Sciatic nerve (tissue), 2 donors: ENCODE measurements at regions of chr17 and their contacts with region 1.

Region 1: GRCh38 chr17:78360371-78361224 is 721 bp upstream of the SOCS3 start:
- DNase-seq: peak; percentile 98
- ATAC-seq: peak; percentile 76

Region 2: DNA sequence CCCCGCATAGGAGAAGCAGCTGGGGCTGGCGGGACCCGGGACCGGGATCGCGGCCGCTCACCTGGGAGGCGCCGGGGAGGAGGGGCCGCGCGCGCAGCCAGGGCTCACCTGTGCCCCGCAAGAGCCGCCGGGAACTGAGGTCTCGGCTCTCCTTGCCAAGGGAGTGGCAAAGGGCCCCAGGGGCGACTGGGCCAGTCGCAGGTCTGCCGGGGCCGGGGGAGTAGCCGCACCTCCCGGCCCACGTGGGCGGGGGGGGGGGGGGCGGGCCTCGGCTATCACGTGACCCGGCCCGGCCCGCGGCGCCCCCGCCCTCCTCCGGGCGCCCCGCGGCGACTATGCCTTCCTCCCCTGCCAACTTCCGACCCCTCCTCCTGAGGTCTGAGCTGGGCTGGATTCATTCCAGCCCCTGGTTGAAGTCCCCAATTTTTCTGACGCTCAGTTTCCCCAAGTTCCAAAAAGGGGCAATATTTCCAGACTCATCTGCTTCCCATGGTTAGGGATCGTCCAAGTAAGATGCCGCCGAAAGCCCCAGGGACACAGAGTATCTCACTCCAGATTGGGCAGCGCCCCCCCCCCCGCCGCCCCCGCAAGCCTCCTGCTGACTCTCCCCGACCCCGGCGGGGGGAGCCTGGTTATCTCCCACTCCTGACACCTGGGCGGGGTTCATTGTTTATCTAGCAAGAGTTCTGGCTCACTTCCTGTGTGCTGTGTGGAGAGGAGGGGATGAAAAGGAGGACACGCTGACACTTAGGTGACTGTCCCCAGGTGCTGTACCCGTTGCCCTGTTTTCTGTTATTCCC is 231.8 kb before region 1 on chr17 and contains the start of gene TMC6:
- intact Hi-C with region 1: loop called (anchors 10 kb)
- DNase-seq: peak; percentile 65
- ATAC-seq: no peak
- total RNA-seq, gene TMC6: 95.0 TPM

Region 3: GRCh38 chr17:78289802-78290363 is 70.7 kb before region 1 on chr17:
- intact Hi-C with region 1: loop called (anchors 10 kb)
- DNase-seq: peak; percentile 87
- ATAC-seq: peak; percentile 91